ENCODE measurements at regions of chrX and their contacts with region 1.

Region 1: DNA sequence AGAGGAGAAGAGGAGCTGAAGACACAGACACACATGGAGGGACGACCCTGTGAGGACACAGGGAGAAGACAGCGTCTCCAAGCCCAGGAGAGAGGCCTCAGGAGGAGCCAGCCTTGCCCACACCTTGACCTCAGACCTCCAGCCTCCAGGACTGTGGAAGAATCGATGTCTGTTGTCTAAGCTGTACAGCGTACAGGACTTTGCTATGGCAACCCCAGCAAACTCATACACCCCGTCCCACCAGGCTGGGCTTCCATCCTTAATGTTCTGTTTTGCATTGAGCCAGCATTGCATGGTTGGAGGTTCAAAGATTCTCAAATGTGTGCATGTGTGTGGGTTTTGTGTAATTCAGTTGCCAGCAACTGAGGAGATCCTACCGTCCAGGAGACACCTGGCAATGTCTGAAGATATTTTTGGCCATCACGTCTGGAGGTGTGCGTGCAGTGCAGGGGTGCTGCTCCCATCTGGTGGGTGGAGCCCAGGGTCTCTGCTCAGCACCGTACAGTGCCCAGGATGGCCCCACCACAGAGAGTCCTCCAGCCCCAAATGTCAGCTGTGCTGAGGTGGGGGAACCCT is 4.4 kb upstream of the ASMTL start:
- DNase-seq: no peak
- H3K4me3 ChIP-seq: no peak overlapping the region
- H3K27ac ChIP-seq: no peak overlapping the region
- H3K4me1 ChIP-seq: peaks cover 12% of the 10 kb centered on the region
- H3K27me3 ChIP-seq: no peaks in the 10 kb centered on the region
- CTCF ChIP-seq: no peak

Region 2: DNA sequence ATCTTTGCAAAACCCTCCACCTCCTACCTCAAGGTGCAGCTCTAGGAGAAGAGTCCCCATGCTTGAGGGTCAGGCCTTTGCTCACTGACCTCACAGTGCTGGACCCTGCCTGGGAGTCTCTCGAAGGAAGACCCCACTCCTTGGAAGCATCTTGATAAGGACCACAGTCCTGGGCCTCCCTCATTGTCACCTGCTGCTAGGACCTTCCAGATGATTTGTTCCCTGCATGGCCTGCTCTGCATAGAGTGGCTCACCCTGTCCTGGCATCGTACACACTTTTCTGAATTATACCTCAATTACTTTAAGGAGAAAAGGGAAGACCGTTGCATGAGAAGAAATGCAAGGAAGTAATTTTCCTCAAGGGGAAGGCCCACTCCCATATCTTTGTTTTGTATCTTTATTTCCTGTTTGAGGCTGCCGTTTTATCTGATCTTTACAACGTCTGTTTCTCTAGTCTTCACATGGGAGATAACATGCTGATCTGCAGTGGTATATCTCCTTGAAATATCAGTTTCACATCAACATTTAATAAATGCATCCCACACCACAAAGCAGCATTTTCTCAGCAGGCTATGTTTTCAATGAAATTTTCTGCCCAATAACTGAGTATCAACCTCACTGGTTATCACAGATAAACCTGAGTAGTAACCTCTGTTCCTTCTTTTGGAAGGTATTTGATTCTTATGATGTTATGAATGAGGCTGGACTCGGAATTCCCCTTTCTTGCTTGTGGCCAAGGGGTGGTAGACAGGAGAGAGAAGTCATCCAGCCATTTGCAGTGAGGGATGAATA is 119.3 kb after region 1 on chrX:
- intact Hi-C with region 1: loop called (anchors 5 kb)
- DNase-seq: no peak
- H3K4me3 ChIP-seq: no peak overlapping the region
- H3K27ac ChIP-seq: no peak overlapping the region
- H3K4me1 ChIP-seq: no peaks in the 10 kb centered on the region
- H3K27me3 ChIP-seq: peaks cover 14% of the 10 kb centered on the region
- CTCF ChIP-seq: no peak

Measured in left ventricle myocardium inferior (tissue), 1 donor.